PC-9 (cell line): ENCODE measurements at regions of chr14 and their contacts with region 1.

Region 1: GRCh38 chr14:74566174-74567125 is 45.6 kb downstream of the LTBP2 start:
- DNase-seq: peak; percentile 100
- H3K4me3 ChIP-seq: peak overlapping the region; percentile 43; the same call in 1 of the 2 replicates
- H3K27ac ChIP-seq: peak overlapping the region; percentile 98
- H3K4me1 ChIP-seq: peaks cover 95% of the 10 kb centered on the region
- H3K27me3 ChIP-seq: no peaks in the 10 kb centered on the region
- CTCF ChIP-seq: 0 out of 2 replicates have a peak, but pooled peaks have one; percentile 10

Region 2: GRCh38 chr14:73977600-73978295 is 588.7 kb before region 1 on chr14:
- CTCF ChIA-PET with region 1: no interaction called
- POLR2A ChIA-PET with region 1: no interaction called
- intact Hi-C with region 1: no loop called
- DNase-seq: peak in 1 of 2 experiments; percentile 73
- H3K4me3 ChIP-seq: no peak overlapping the region
- H3K27ac ChIP-seq: 0 out of 2 replicates have a peak overlapping the region, but pooled peaks have one; percentile 2
- H3K4me1 ChIP-seq: peaks cover 20% of the 10 kb centered on the region
- H3K27me3 ChIP-seq: no peaks in the 10 kb centered on the region
- CTCF ChIP-seq: no peak

Region 3: DNA sequence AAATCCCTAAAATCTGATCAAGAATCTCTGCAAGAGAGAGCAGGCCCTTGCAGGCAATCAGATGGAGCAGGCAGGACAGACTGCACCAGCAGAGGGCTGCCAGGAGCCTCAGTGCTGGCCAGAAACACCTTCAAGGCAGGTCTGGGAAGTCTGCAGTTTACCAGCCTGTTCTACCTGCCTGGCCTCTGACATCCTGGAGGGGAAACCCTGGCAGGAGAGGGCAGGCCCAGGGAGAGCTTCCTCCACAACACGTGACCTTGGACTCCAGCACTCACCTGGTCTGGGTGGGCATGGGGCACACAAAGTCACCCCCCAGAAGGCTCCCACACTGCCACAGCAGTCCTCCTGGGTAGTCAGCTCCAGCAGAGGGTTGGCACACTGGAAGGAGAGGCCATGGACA is 16.9 kb before region 1 on chr14:
- CTCF ChIA-PET with region 1: interaction called, 10 read pairs
- POLR2A ChIA-PET with region 1: no interaction called
- intact Hi-C with region 1: no loop called
- DNase-seq: peak; percentile 74 to 85
- H3K4me3 ChIP-seq: no peak overlapping the region
- H3K27ac ChIP-seq: peak overlapping the region; percentile 14
- H3K4me1 ChIP-seq: peaks cover 13% of the 10 kb centered on the region
- H3K27me3 ChIP-seq: no peaks in the 10 kb centered on the region
- CTCF ChIP-seq: peak; percentile 88

Region 4: DNA sequence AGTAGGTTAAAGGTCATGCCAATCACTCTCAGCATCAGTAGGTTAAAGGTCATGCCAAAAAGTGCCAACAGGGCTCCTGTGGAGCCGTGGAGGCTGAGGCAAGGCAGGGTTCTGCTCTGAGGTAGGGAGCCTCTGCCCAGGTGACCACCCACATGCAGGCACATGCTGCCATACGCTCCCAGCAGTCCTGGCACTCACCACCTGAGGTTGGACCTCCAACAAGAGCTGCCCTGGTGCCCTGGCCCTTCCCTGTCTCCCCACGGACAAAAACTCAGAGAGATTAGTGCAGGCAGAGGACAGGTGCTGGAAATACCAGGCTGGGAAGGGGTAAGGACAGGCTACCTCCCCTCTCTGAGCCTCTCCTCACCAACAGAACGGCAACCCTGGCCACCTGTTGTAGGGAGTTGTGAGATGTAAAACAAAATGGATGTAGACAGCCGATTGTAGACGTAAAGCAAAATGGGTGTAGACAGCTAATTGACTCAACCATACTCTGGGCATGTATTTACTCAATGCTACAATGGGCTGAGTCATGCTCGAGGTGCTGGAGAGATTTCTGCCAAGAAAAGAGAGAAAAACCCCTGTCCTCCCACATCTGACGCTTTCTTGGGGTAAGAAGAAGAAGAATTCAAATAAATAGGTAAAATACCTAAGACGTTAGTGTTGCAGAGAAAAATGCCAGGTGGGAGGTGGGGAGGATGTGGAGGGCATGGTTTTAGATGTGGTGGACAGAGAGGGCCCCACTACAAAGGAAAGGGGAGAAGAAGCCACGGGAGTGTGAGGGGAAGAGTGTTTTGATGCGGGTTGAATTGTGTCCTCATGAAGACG is 13.2 kb after region 1 on chr14:
- CTCF ChIA-PET with region 1: interaction called, 14 read pairs
- POLR2A ChIA-PET with region 1: interaction called, 30 read pairs
- intact Hi-C with region 1: loop called (anchors 1 kb)
- DNase-seq: peak; percentile 84 to 98
- H3K4me3 ChIP-seq: no peak overlapping the region
- H3K27ac ChIP-seq: peak overlapping the region; percentile 94
- H3K4me1 ChIP-seq: peaks cover 85% of the 10 kb centered on the region
- H3K27me3 ChIP-seq: no peaks in the 10 kb centered on the region
- CTCF ChIP-seq: no peak

Region 5: DNA sequence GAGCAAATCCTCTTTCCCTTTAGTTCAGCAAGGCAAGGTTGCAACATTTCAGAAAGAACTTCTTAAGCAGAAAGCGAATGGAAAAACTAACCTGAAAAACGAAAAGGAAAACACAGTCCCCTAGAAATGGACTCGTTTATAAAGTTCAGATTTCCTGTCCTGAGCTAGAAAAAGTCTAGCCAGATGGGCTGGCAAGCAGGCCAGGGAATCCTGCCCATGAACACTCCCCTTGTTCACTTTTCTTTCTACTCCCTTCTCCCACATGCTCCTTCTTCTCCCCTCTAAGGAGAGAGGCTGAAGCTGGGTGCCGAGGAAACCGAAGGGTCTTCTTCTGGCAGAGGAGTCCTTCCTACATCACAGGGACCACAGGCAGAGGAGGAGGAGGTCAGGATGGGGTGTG is 18.5 kb after region 1 on chr14:
- CTCF ChIA-PET with region 1: interaction called, 14 read pairs
- POLR2A ChIA-PET with region 1: interaction called, 30 read pairs
- intact Hi-C with region 1: loop called (anchors 1 kb)
- DNase-seq: no peak
- H3K4me3 ChIP-seq: no peak overlapping the region
- H3K27ac ChIP-seq: peak overlapping the region; percentile 34; the same call in 1 of the 2 replicates
- H3K4me1 ChIP-seq: peaks cover 50% of the 10 kb centered on the region
- H3K27me3 ChIP-seq: no peaks in the 10 kb centered on the region
- CTCF ChIP-seq: no peak